CD4-positive, alpha-beta memory T cell (primary cell): ENCODE measurements at regions of chr1 and their contacts with region 1.

Region 1: GRCh38 chr1:8026153-8026975 is at the start of gene ERRFI1:
- DNase-seq: peak; percentile 80 to 88 (median 81)
- H3K4me3 ChIP-seq: peak within 1 kb of the TSS in 1 of 2 donors; percentile 33
- H3K4me3 Mint-ChIP-seq: peak within 1 kb of the TSS; percentile 81 to 91 (median 86)
- H3K27ac ChIP-seq: no peak within 1 kb of the TSS
- H3K27ac Mint-ChIP-seq: peak within 1 kb of the TSS; percentile 8 to 89 (median 86)
- H3K4me1 ChIP-seq: peaks cover 14% of the 10 kb centered on the region
- H3K4me1 Mint-ChIP-seq: peaks cover 8 to 13% (median 10%) of the 10 kb centered on the region in 4 donors
- H3K27me3 ChIP-seq: peaks cover 6% of the 10 kb centered on the region
- H3K27me3 Mint-ChIP-seq: peaks cover 7 to 13% of the 10 kb centered on the region in 2 donors
- total RNA-seq, gene ERRFI1: 1.0 TPM

Region 2: GRCh38 chr1:7873801-7874795 is 152.3 kb before region 1 on chr1:
- CTCF ChIA-PET with region 1: no interaction called
- POLR2A ChIA-PET with region 1: no interaction called
- intact Hi-C with region 1: no loop called
- DNase-seq: no peak
- H3K4me3 ChIP-seq: no peak overlapping the region
- H3K4me3 Mint-ChIP-seq: no peak overlapping the region
- H3K27ac ChIP-seq: no peak overlapping the region
- H3K27ac Mint-ChIP-seq: no peak overlapping the region
- H3K4me1 ChIP-seq: no peaks in the 10 kb centered on the region
- H3K4me1 Mint-ChIP-seq: no peaks in the 10 kb centered on the region
- H3K27me3 ChIP-seq: no peaks in the 10 kb centered on the region
- H3K27me3 Mint-ChIP-seq: peaks cover 3 to 6% of the 10 kb centered on the region in 2 donors

Region 3: GRCh38 chr1:8015036-8015808 is 11.1 kb before region 1 on chr1:
- CTCF ChIA-PET with region 1: interaction called, 41 read pairs
- POLR2A ChIA-PET with region 1: interaction called, 4 read pairs
- intact Hi-C with region 1: no loop called
- DNase-seq: peak in 4 of 5 donors; percentile 55 to 59 (median 58)
- H3K4me3 ChIP-seq: no peak overlapping the region
- H3K4me3 Mint-ChIP-seq: no peak overlapping the region
- H3K27ac ChIP-seq: no peak overlapping the region
- H3K27ac Mint-ChIP-seq: no peak overlapping the region
- H3K4me1 ChIP-seq: no peaks in the 10 kb centered on the region
- H3K4me1 Mint-ChIP-seq: peaks cover 0 to 1% (median under 1%) of the 10 kb centered on the region in 4 donors
- H3K27me3 ChIP-seq: no peaks in the 10 kb centered on the region
- H3K27me3 Mint-ChIP-seq: peaks cover 10 to 18% of the 10 kb centered on the region in 2 donors

Region 4: DNA sequence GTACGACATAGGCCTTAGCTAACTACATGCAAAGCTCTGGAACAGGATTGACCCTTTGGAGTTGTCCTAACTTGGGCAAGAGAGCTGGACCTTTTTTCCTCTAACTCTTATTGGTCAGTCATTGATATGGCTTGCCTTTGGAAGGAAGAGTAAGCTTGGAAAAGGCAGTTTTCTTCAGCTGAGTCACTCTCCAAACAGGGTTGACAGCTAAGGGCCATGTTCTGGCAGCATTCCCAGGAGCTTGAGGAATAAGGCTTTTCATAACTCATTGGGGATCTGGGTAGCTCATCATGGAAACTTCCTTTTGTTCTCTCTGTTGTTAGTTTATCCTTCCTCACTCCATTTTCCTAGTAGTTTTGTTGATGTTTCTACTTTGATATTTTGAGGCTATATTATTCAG is 14.2 kb after region 1 on chr1:
- CTCF ChIA-PET with region 1: interaction called, 13 read pairs
- POLR2A ChIA-PET with region 1: no interaction called
- intact Hi-C with region 1: no loop called
- DNase-seq: no peak
- H3K4me3 ChIP-seq: no peak overlapping the region
- H3K4me3 Mint-ChIP-seq: no peak overlapping the region
- H3K27ac ChIP-seq: no peak overlapping the region
- H3K27ac Mint-ChIP-seq: no peak overlapping the region
- H3K4me1 ChIP-seq: no peaks in the 10 kb centered on the region
- H3K4me1 Mint-ChIP-seq: no peaks in the 10 kb centered on the region
- H3K27me3 ChIP-seq: no peaks in the 10 kb centered on the region
- H3K27me3 Mint-ChIP-seq: peaks cover 0 to 1% of the 10 kb centered on the region in 2 donors

Region 5: DNA sequence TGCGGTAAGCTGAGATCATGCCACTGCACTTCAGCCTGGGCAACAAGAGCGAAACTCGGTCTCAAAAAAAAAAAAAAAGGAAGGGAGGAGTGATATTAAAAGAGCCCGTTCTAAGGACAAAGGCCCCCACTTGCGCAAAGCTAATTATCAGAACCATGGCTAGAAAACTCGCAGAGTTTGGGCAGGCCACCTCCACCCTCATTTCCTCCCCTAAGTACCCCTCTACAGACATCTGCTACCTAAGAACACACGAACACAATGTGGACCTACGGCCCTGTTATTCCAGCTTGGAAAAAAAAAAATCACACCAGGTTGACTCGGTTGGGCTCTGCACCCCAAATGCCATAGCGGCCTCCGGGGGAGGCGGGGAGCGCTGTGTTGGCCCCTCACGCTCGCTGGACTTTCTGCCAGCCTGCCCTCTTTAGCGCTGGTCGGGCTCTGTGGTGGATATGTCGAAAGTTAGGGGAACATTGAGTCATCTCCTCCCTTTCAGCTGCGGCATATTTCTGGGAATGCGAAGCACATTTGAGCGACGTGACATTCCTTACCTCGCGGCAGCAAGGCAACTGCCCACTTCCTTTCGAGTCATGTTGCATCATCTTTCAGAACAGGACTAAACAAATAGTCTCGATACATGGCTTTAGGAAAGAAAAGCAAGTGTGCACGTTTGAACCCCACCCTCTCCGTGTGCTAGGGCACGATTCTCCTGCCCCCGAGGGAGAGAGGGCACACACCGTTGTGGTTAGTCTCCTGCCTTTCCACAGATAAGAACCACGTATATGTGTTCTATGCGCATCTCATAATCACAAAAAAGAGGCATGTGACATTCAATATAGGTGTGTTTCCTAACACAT is 185.5 kb after region 1 on chr1:
- CTCF ChIA-PET with region 1: no interaction called
- POLR2A ChIA-PET with region 1: no interaction called
- intact Hi-C with region 1: loop called (anchors 10 kb)
- DNase-seq: no peak
- H3K4me3 ChIP-seq: no peak overlapping the region
- H3K4me3 Mint-ChIP-seq: peak overlapping the region in 4 of 8 donors; percentile 16 to 41 (median 34)
- H3K27ac ChIP-seq: no peak overlapping the region
- H3K27ac Mint-ChIP-seq: no peak overlapping the region
- H3K4me1 ChIP-seq: peaks cover 7% of the 10 kb centered on the region
- H3K4me1 Mint-ChIP-seq: peaks cover 6 to 12% (median 10%) of the 10 kb centered on the region in 4 donors
- H3K27me3 ChIP-seq: no peaks in the 10 kb centered on the region
- H3K27me3 Mint-ChIP-seq: peaks cover 9 to 22% of the 10 kb centered on the region in 2 donors

Region 6: GRCh38 chr1:8314346-8315280 is 288.2 kb after region 1 on chr1:
- CTCF ChIA-PET with region 1: interaction called, 56 read pairs
- POLR2A ChIA-PET with region 1: interaction called, 4 read pairs
- intact Hi-C with region 1: loop called (anchors 1 kb)
- DNase-seq: peak; percentile 44 to 53 (median 50)
- H3K4me3 ChIP-seq: no peak overlapping the region
- H3K4me3 Mint-ChIP-seq: peak overlapping the region in 1 of 8 donors; percentile 55
- H3K27ac ChIP-seq: no peak overlapping the region
- H3K27ac Mint-ChIP-seq: peak overlapping the region in 1 of 7 donors; percentile 69
- H3K4me1 ChIP-seq: peaks cover 11% of the 10 kb centered on the region
- H3K4me1 Mint-ChIP-seq: peaks cover 4 to 30% (median 16%) of the 10 kb centered on the region in 4 donors
- H3K27me3 ChIP-seq: peaks cover 8% of the 10 kb centered on the region
- H3K27me3 Mint-ChIP-seq: peaks cover 16 to 24% of the 10 kb centered on the region in 2 donors

Region 7: GRCh38 chr1:8348777-8349491 is 322.6 kb after region 1 on chr1:
- CTCF ChIA-PET with region 1: interaction called, 48 read pairs
- POLR2A ChIA-PET with region 1: interaction called, 4 read pairs
- intact Hi-C with region 1: loop called (anchors 1 kb)
- DNase-seq: peak; percentile 58 to 71 (median 64)
- H3K4me3 ChIP-seq: no peak overlapping the region
- H3K4me3 Mint-ChIP-seq: no peak overlapping the region
- H3K27ac ChIP-seq: no peak overlapping the region
- H3K27ac Mint-ChIP-seq: peak overlapping the region in 3 of 7 donors; percentile 13 to 61 (median 59)
- H3K4me1 ChIP-seq: no peaks in the 10 kb centered on the region
- H3K4me1 Mint-ChIP-seq: peaks cover 2 to 14% (median 4%) of the 10 kb centered on the region in 4 donors
- H3K27me3 ChIP-seq: no peaks in the 10 kb centered on the region
- H3K27me3 Mint-ChIP-seq: peaks cover 0 to 2% of the 10 kb centered on the region in 2 donors